H1 (cell line): ENCODE measurements at regions of chr6 and their contacts with region 1.

Region 1: GRCh38 chr6:158718461-158719046 is 68.7 kb downstream of the SYTL3 start:
- DNase-seq: peak; percentile 77 to 82
- H3K4me3 ChIP-seq: no peak overlapping the region
- H3K27ac ChIP-seq: no peak overlapping the region
- H3K4me1 ChIP-seq: peaks cover 0 to 9% (median 3%) of the 10 kb centered on the region in 4 experiments; a peak in 4 of 7 replicates
- H3K27me3 ChIP-seq: no peaks in the 10 kb centered on the region
- CTCF ChIP-seq: peak; percentile 84 to 94 (median 93)
- EP300 ChIP-seq: no peak; a peak in 1 of 3 replicates
- POLR2A ChIP-seq: no peak
- RAD21 ChIP-seq: peak; percentile 95

Region 2: GRCh38 chr6:158559895-158560835 is 158.4 kb before region 1 on chr6 and contains the start of gene TMEM181:
- CTCF ChIA-PET with region 1: no interaction called
- POLR2A ChIA-PET with region 1: no interaction called
- DNase-seq: peak in 1 of 2 experiments; percentile 88
- H3K4me3 ChIP-seq: peak within 1 kb of the TSS; percentile 58 to 95 (median 66)
- H3K27ac ChIP-seq: peak within 1 kb of the TSS; percentile 70; the same call in 1 of the 2 replicates
- H3K4me1 ChIP-seq: peaks cover 5 to 9% (median 8%) of the 10 kb centered on the region in 4 experiments; a peak in 6 of 7 replicates
- H3K27me3 ChIP-seq: no peaks in the 10 kb centered on the region
- CTCF ChIP-seq: no peak
- EP300 ChIP-seq: no peak
- POLR2A ChIP-seq: peak; percentile 14 to 78
- RAD21 ChIP-seq: no peak
- total RNA-seq, gene TMEM181: 18.2 and 19.0 TPM in 2 replicates

Region 3: DNA sequence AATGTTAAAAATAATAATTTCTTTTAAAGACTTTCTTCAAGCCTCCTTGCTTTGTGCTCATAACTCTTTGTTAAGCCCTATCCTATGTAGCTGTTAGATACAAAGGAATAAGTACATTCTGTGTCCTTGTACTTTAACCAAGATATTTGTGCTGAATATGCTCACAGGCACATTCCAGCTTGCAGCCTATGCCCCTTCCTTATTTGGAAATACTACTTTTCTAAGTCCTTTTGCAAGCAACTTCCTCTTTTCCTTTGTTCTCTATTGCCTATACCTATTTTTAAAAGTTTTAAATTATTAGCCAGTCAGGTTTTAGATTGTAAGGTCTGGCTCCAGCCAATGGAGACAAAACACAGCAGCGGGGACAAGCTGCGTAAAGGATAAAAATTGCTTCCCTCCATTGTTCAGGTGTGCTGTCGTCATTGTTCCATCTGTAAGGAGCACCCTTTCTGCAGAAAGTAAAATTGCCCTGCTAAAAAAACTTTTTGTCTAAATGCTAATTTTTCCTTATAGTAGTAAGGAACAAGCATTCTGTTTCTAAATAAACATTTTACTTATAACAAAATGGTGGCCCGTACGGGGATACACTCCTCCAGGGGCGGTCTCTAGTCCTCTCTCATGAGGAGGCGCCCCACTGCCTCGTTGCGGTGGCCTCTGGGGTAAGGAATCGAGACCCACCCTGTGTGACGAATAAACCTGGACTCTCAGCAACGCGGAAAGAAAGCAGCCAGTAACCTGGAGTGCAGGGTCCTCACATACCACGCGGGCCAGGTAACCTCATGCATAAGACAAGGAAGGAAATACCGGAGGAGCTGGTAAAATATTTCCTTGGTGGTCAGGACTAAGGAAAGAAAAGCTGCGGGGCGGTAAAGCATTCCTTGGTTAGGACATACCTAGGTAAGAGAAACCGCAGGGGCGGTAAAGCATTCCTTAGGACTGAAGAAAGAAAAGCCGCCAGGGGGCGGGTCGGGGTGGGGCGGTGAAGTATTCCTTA is 11.7 kb after region 1 on chr6:
- CTCF ChIA-PET with region 1: interaction called, 35 read pairs
- POLR2A ChIA-PET with region 1: interaction called, 6 read pairs
- DNase-seq: peak in 1 of 2 experiments; percentile 82
- H3K4me3 ChIP-seq: peak overlapping the region in 3 of 4 experiments; percentile 12 to 58 (median 15); a peak in 5 of 8 replicates
- H3K27ac ChIP-seq: peak overlapping the region; percentile 90
- H3K4me1 ChIP-seq: no peaks in the 10 kb centered on the region
- H3K27me3 ChIP-seq: no peaks in the 10 kb centered on the region
- CTCF ChIP-seq: peak in 2 of 3 experiments; percentile 19 to 22; a peak in 1 of 4 replicates
- EP300 ChIP-seq: peak in 1 of 2 experiments; percentile 85; a peak in 1 of 3 replicates
- POLR2A ChIP-seq: peak; percentile 50 to 55
- RAD21 ChIP-seq: peak; percentile 3 to 34; a peak in 2 of 4 replicates

Region 4: DNA sequence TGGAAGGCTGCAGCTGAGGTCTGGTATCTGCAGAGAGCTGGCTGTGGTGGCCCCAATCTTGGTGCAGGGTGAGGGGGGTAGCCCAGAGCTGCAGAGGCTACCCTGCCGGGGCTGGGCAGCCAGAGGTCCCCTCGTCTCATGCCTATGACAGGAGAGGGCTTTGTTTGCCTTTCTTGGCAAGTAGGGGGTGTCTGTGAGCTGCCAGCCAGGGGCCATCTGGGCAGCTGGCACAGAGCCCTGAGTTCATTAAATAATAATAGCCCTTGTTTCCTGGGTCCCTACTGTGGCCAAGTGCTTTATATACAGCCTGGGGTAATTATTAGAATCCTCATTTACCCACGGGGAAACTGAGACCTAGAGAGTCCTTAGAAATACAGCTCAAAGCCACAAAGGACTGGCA is 34.1 kb after region 1 on chr6:
- CTCF ChIA-PET with region 1: interaction called, 14 read pairs
- POLR2A ChIA-PET with region 1: interaction called, 3 read pairs
- DNase-seq: no peak
- H3K4me3 ChIP-seq: no peak overlapping the region
- H3K27ac ChIP-seq: no peak overlapping the region
- H3K4me1 ChIP-seq: peaks cover 0 to 7% (median under 1%) of the 10 kb centered on the region in 4 experiments; a peak in 3 of 7 replicates
- H3K27me3 ChIP-seq: no peaks in the 10 kb centered on the region; a peak in 2 of 7 replicates
- CTCF ChIP-seq: peak; percentile 29 to 39 (median 30)
- EP300 ChIP-seq: no peak
- POLR2A ChIP-seq: no peak
- RAD21 ChIP-seq: peak; percentile 46 to 54

Region 5: GRCh38 chr6:158769771-158770432 is 51.3 kb after region 1 on chr6:
- CTCF ChIA-PET with region 1: interaction called, 16 read pairs
- POLR2A ChIA-PET with region 1: interaction called, 38 read pairs
- DNase-seq: no peak
- H3K4me3 ChIP-seq: no peak overlapping the region
- H3K27ac ChIP-seq: no peak overlapping the region
- H3K4me1 ChIP-seq: peaks cover 0 to 5% (median 0%) of the 10 kb centered on the region in 4 experiments; a peak in 2 of 7 replicates
- H3K27me3 ChIP-seq: no peaks in the 10 kb centered on the region
- CTCF ChIP-seq: no peak
- EP300 ChIP-seq: no peak
- POLR2A ChIP-seq: no peak
- RAD21 ChIP-seq: no peak

Region 6: DNA sequence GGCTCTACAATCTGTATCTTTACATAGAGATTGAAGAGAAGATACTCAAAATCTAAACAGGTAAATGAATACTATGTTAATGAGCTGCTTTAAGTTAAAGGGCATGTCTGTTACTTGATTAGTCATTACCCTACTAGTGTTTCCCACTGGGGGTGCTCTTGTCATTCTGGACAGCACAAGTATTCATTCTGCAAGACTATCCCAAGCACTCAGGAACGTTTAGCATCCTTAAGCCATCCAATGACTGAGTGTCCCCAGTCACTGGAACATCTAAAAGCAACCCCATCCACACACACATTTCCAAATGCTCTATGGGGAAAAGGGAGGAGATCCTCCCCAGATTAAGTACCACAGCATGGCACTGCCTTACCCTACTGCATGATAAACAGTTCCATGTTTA is 74.9 kb after region 1 on chr6:
- CTCF ChIA-PET with region 1: interaction called, 11 read pairs
- POLR2A ChIA-PET with region 1: no interaction called
- DNase-seq: no peak
- H3K4me3 ChIP-seq: no peak overlapping the region
- H3K27ac ChIP-seq: no peak overlapping the region
- H3K4me1 ChIP-seq: peaks cover 0 to 9% (median 5%) of the 10 kb centered on the region in 4 experiments; a peak in 6 of 7 replicates
- H3K27me3 ChIP-seq: no peaks in the 10 kb centered on the region
- CTCF ChIP-seq: peak in 2 of 3 experiments; percentile 30 to 57; a peak in 3 of 4 replicates
- EP300 ChIP-seq: no peak
- POLR2A ChIP-seq: no peak
- RAD21 ChIP-seq: peak; percentile 66 to 72